ENCODE measurements at regions of chr12 and their contacts with region 1.

Region 1: GRCh38 chr12:117025481-117026151 is 73.6 kb downstream of the TESC start:
- DNase-seq: peak; percentile 62 to 84 (median 80)
- ATAC-seq: peak; percentile 81 to 84
- H3K4me3 ChIP-seq: no peak overlapping the region
- H3K27ac ChIP-seq: no peak overlapping the region
- H3K4me1 ChIP-seq: no peaks in the 10 kb centered on the region
- H3K27me3 ChIP-seq: no peaks in the 10 kb centered on the region

Region 2: DNA sequence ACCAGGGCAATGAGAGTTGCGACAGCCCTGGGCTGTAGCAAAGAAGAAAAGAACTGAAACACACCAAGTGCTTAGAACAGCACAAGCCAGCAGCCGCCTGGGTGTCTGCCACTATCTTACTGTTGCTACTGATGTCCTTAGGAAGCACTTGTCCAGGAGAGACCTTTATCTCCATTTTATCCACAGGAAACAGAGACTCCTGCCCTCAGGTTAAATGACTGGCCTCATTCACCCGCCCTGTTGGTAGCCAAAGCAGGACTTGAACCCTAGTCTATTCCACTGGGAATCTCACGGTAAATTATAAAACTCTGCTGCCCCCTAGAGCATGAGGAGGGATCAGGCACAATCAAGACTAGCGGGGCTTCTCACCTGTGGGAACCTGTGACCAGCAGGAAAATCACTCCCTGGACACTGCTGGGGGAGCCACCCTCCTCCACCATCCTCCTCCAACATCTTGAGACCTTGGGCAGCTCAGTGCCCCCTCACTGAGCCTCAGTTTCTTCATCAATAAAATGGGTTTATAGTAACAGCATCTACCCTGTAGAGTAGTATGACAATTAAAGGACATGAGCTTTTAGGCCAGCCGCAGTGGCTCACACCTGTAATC is 94.1 kb after region 1 on chr12:
- intact Hi-C with region 1: loop called in 3 of 4 experiments (anchors 5 to 10 kb)
- DNase-seq: no peak
- ATAC-seq: peak; percentile 45 to 55
- H3K4me3 ChIP-seq: no peak overlapping the region
- H3K27ac ChIP-seq: peak overlapping the region; percentile 25
- H3K4me1 ChIP-seq: peaks cover 9% of the 10 kb centered on the region
- H3K27me3 ChIP-seq: no peaks in the 10 kb centered on the region

Region 3: DNA sequence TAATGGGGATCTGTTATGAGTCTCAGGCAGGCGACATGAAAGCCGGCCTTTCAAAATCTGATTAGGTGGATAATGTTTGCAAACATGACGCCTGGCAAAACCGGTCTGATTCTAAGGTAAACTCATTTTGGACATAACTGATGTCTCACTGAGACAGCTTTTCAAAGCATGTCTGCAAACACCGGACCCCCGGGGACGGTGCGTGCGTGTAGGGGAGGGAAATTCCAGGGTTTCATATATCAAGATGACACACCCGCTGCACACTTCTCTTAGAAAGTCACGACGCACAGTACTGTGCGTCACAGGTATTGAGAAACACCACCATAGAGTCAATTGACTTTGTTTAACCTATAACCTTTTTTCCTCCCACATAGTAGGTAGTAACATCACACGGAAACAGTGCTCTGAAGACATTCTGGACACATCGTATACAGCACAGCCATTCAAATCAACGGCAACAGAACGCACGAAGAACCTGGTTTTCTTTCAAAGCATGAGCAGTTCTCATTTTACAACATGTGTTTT is 117.5 kb after region 1 on chr12:
- intact Hi-C with region 1: loop called in 1 of 4 experiments (anchors 10 kb)
- DNase-seq: no peak
- ATAC-seq: no peak
- H3K4me3 ChIP-seq: no peak overlapping the region
- H3K27ac ChIP-seq: no peak overlapping the region
- H3K4me1 ChIP-seq: no peaks in the 10 kb centered on the region
- H3K27me3 ChIP-seq: no peaks in the 10 kb centered on the region

Region 4: DNA sequence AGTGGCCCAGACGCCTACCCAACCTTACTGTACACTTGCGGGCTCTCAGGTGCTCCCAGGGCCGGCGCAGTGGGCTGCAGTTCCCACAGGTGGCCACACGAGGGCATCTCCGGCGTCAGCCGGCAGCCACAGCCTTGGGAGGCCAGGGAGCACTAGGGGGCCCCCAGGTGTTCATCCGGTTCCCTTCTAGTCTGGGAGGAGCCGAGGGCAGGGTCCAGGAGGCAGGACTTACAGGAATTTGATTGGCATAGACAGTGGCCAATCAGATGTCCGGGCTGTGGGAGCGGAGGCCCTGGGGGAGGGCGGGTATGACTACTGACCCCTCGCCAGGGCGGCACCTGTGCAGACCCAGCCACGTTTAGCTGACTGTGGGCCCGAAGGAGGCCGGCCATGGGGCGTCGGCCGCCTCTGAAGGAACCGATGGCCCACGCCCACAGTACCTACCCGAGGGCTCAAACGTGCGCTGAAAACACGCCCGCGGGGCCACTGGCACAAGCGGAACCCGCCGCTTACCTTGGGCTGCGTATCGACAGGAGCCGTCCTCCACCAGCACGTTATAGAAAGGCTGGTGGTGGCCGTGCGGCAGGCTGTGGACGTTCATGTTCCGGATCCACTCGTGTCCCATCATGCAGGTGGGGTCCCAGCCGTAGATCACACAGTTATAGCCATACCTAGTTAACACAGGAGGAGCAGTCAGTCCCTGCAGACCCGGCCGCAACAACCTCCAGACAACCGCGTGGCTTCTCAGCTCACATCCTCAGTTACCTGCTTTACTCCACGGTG is 129.9 kb after region 1 on chr12:
- intact Hi-C with region 1: loop called in 3 of 4 experiments (anchors 10 kb)
- DNase-seq: peak in 2 of 3 donors; percentile 73 to 76
- ATAC-seq: peak; percentile 36 to 47
- H3K4me3 ChIP-seq: no peak overlapping the region
- H3K27ac ChIP-seq: no peak overlapping the region
- H3K4me1 ChIP-seq: no peaks in the 10 kb centered on the region
- H3K27me3 ChIP-seq: no peaks in the 10 kb centered on the region